Left ventricle myocardium inferior (tissue), 1 donor: ENCODE measurements at regions of chr4 and their contacts with region 1.

Region 1: GRCh38 chr4:90127223-90127705 is at the start of gene CCSER1:
- DNase-seq: peak; percentile 77
- H3K4me3 ChIP-seq: peak within 1 kb of the TSS; percentile 77
- H3K27ac ChIP-seq: peak within 1 kb of the TSS; percentile 86
- H3K4me1 ChIP-seq: peaks cover 24% of the 10 kb centered on the region
- H3K27me3 ChIP-seq: peaks cover 17% of the 10 kb centered on the region
- CTCF ChIP-seq: no peak
- total RNA-seq, gene CCSER1: 13.2 TPM

Region 2: GRCh38 chr4:89773805-89774204 is 353.5 kb before region 1 on chr4:
- intact Hi-C with region 1: no loop called
- DNase-seq: no peak
- H3K4me3 ChIP-seq: no peak overlapping the region
- H3K27ac ChIP-seq: no peak overlapping the region
- H3K4me1 ChIP-seq: no peaks in the 10 kb centered on the region
- H3K27me3 ChIP-seq: no peaks in the 10 kb centered on the region
- CTCF ChIP-seq: no peak

Region 3: GRCh38 chr4:89998469-89999011 is 128.7 kb before region 1 on chr4:
- intact Hi-C with region 1: no loop called
- DNase-seq: no peak
- H3K4me3 ChIP-seq: no peak overlapping the region
- H3K27ac ChIP-seq: no peak overlapping the region
- H3K4me1 ChIP-seq: peaks cover 7% of the 10 kb centered on the region
- H3K27me3 ChIP-seq: no peaks in the 10 kb centered on the region
- CTCF ChIP-seq: no peak

Region 4: GRCh38 chr4:90293320-90293719 is 166.1 kb after region 1 on chr4:
- intact Hi-C with region 1: loop called (anchors 10 kb)
- DNase-seq: no peak
- H3K4me3 ChIP-seq: no peak overlapping the region
- H3K27ac ChIP-seq: no peak overlapping the region
- H3K4me1 ChIP-seq: peaks cover 1% of the 10 kb centered on the region
- H3K27me3 ChIP-seq: no peaks in the 10 kb centered on the region
- CTCF ChIP-seq: peak; percentile 62